ENCODE measurements at regions of chr4 and their contacts with region 1.

Region 1: DNA sequence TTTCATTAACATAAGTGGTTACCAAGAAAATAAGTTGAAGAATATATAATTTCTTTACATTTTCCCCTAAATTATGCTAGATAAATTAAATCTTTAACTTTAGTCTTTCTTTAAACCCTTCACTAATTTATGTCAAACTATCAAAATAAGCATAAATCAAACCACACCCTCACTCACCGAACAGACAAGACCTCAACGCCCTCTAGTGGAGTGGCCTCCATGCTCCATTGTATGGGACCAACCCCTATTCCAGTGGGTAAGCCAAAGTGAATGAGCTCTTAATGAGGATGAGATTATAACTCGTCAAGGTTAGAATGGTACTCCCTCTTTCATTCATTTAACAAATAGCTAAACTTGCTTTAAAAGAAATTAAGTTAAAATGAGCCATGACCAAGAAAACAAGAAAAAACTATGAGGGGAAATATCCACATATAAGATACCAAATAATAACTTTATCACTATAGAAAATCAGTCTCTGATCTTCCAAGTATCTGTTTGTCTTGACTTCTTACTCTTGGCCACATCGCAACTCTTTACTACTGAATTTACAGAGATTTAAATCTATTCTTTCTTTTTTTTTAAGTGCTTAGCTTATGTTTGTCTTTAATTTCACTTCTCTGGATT is 15.6 kb upstream of the BBS12 start:
- DNase-seq: peak; percentile 50
- ATAC-seq: peak; percentile 94
- H3K4me3 ChIP-seq: no peak overlapping the region
- H3K27ac ChIP-seq: no peak overlapping the region
- H3K4me1 ChIP-seq: no peaks in the 10 kb centered on the region
- H3K27me3 ChIP-seq: no peaks in the 10 kb centered on the region; a peak in 1 of 5 replicates
- CTCF ChIP-seq: peak; percentile 75
- EP300 ChIP-seq: no peak
- POLR2A ChIP-seq: no peak
- RAD21 ChIP-seq: no peak

Region 2: GRCh38 chr4:122602277-122603142 is 114.4 kb before region 1 on chr4:
- CTCF ChIA-PET with region 1: interaction called, 3 read pairs
- POLR2A ChIA-PET with region 1: no interaction called
- in situ Hi-C with region 1: no loop called
- intact Hi-C with region 1: loop called (anchors 2 kb)
- DNase-seq: peak; percentile 36
- ATAC-seq: peak; percentile 92
- H3K4me3 ChIP-seq: no peak overlapping the region
- H3K27ac ChIP-seq: no peak overlapping the region
- H3K4me1 ChIP-seq: no peaks in the 10 kb centered on the region
- H3K27me3 ChIP-seq: no peaks in the 10 kb centered on the region; a peak in 1 of 5 replicates
- CTCF ChIP-seq: peak; percentile 61
- EP300 ChIP-seq: no peak
- POLR2A ChIP-seq: no peak
- RAD21 ChIP-seq: no peak

Region 3: DNA sequence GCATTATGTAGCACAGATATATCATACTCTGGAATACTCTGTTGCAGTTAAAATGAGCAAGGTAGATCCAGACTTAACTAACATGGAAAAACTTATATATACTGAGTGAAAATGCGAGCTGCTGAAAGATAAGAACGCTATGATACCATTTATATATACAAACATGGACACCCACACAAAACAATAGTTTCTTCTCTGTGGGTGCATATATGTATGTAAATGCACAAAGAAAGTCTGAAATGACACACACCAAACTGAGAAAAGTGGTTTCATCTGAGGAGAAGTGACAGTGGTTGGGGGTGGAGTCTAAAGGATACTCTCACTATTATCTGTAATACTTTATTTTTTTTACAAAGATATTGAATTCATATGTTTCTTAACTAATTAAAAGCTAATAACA is 97.5 kb after region 1 on chr4:
- CTCF ChIA-PET with region 1: no interaction called
- POLR2A ChIA-PET with region 1: no interaction called
- in situ Hi-C with region 1: no loop called
- intact Hi-C with region 1: no loop called
- DNase-seq: no peak
- ATAC-seq: no peak
- H3K4me3 ChIP-seq: no peak overlapping the region
- H3K27ac ChIP-seq: no peak overlapping the region
- H3K4me1 ChIP-seq: no peaks in the 10 kb centered on the region
- H3K27me3 ChIP-seq: 0 out of 5 replicates have a peak, but pooled peaks cover 0 to 1% of the 10 kb centered on the region in 2 experiments
- CTCF ChIP-seq: no peak
- EP300 ChIP-seq: no peak
- POLR2A ChIP-seq: no peak
- RAD21 ChIP-seq: no peak